Spleen (tissue), 13 donors: ENCODE measurements at regions of chr19 and their contacts with region 1.

Region 1: DNA sequence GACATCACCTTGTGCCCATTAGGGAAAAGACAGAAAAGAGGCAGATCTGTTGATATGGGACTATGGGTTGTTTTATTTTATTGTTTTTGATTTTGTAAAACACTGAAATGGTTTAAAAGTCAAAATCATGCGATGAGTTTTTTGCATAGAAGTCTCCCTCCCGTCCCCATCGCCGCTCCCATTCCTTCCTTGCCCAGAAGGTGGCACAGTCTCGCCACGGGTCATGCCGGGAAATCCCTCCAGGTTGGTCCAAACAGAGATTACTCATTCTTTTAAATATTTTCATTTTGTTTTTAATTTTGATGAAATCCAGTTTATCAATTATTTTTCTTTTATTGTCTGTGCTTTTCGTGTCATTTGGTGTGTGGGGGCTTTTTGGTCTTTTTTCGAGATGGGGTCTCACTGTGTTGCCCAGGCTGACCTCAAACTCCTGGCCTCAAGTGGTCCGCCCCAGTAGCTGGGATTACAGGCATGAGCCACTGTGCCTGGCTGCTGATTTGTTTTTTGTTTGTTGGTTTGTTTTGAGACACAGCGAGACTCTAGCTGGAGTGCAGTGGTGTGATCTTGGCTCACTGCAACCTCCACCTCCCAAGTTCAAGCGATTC is 9.2 kb downstream of the PGPEP1 start:
- DNase-seq: no peak
- H3K4me3 ChIP-seq: no peak overlapping the region
- H3K27ac ChIP-seq: no peak overlapping the region
- H3K4me1 ChIP-seq: peaks cover 0 to 9% (median 2%) of the 10 kb centered on the region in 6 donors
- H3K27me3 ChIP-seq: no peaks in the 10 kb centered on the region
- CTCF ChIP-seq: peak; percentile 36 to 84 (median 78)
- POLR2A ChIP-seq: no peak

Region 2: DNA sequence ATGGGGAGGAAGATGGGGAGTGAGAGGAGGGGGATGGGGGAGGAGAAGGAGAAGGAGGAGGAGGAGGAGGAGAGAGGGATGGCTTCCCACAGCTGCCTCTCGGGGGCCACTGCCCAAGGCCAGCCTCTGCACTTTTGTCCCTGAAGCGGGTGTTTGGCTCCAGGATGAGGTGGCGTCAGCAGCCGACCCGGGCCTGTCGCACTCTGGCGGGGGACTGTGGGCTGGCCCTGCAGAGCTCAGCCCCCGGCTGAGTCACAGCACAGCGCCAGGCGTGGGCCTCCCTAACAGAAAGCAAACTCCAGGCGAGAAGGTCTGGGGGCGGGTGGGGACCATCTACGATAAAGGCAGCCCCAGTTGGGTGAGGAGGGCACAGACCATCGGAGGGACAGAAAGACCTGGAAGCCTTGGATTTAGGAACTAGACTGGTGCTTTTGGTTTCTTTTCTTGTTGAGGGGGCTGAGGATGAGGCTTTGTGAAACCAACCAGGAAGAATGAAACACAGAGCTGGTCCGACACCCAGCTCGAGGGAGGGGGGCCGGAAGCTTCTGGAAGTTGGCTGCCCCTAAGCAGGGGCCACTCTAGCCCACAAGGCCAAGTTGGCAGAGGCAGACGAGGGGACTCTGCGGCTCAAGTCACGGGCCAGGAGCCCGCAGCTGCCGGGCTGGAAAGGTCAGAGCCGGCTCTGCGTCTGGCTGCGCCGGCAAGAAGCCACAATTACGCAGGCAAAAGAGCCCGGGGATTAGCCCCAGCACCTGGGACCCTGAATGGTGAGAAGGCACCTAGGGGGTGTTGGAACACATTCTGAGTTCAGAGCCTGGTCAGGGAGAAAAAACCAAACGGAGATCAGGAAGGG is 44.9 kb before region 1 on chr19:
- intact Hi-C with region 1: no loop called
- DNase-seq: peak; percentile 94
- H3K4me3 ChIP-seq: peak overlapping the region; percentile 1 to 68 (median 33)
- H3K27ac ChIP-seq: peak overlapping the region; percentile 93 to 99 (median 98)
- H3K4me1 ChIP-seq: peaks cover 61 to 96% (median 73%) of the 10 kb centered on the region in 6 donors
- H3K27me3 ChIP-seq: no peaks in the 10 kb centered on the region
- CTCF ChIP-seq: peak in 1 of 11 experiments; percentile 18
- POLR2A ChIP-seq: peak in 2 of 3 donors; percentile 63 to 64

Region 3: DNA sequence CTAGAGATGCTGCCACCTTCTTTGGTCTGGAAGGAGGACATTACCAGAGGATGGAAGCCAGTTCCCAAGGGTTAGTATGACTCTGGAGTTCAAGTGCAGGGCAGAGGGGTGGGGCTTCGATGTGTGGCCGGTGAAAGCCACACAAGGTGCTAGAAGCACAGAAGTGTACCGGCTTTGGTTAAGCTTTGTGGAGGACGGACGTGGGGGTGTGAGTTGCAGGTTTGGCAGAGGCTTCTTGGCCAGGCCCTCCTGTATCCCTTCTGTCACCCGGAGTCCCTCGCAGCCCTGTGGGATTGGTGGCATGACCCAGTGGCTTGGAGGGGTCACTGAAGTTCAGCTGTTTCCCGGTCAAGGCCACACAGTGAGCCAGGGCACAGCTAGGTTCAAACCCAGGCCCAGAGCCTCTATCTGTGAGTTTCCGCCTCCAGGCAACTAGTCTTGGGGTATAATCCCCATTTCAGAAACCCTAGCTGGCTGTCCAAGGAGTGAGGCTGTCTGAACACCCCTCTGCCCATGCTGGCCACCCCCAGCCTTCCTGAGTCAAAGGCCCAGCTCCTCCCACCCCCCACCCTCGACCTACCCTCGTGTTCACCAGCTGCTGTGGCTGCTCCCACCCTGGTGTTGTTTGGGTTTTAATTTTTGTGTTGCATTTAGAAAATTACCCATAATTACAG is 65.0 kb after region 1 on chr19:
- intact Hi-C with region 1: loop called (anchors 5 kb)
- DNase-seq: peak; percentile 78
- H3K4me3 ChIP-seq: peak overlapping the region in 3 of 8 donors; percentile 19 to 57 (median 26)
- H3K27ac ChIP-seq: peak overlapping the region; percentile 69 to 94 (median 90)
- H3K4me1 ChIP-seq: peaks cover 46 to 71% (median 60%) of the 10 kb centered on the region in 6 donors
- H3K27me3 ChIP-seq: peaks cover 0 to 76% (median 11%) of the 10 kb centered on the region in 7 donors
- CTCF ChIP-seq: no peak
- POLR2A ChIP-seq: no peak